ENCODE measurements at regions of chr15 and their contacts with region 1.

Region 1: DNA sequence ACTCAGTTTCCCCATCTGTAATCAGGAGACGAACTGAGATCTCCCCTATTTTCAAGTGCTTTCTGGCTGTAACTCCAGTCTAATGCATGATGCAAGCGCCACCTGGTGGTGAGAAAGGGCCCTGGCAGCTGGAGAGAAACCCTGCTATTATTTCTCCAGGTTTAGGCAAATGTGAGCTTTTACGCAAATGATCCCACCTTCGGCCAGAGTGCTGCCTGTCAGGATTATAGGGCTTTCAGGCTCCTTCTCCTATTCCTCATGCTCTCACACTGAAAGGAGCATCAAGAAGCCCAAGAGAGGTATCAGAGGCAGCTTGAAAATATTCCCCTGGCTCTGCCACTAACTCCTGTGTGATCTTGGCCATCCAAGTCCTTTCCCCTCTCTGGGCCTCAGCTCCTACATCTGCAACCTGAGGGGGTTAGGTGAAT is 93.9 kb upstream of the RASGRF1 start:
- DNase-seq: peak; percentile 8
- H3K4me3 ChIP-seq: no peak overlapping the region
- H3K27ac ChIP-seq: no peak overlapping the region
- H3K27me3 ChIP-seq: peaks cover 10% of the 10 kb centered on the region
- CTCF ChIP-seq: peak; percentile 97

Region 2: GRCh38 chr15:78872972-78873792 is 311.3 kb before region 1 on chr15:
- CTCF ChIA-PET with region 1: interaction called, 10 read pairs
- POLR2A ChIA-PET with region 1: no interaction called
- DNase-seq: peak; percentile 85
- H3K4me3 ChIP-seq: peak overlapping the region; percentile 99
- H3K27ac ChIP-seq: peak overlapping the region; percentile 100
- H3K27me3 ChIP-seq: no peaks in the 10 kb centered on the region
- CTCF ChIP-seq: peak; percentile 59

Region 3: GRCh38 chr15:78915341-78916087 is 269.0 kb before region 1 on chr15:
- CTCF ChIA-PET with region 1: interaction called, 33 read pairs
- POLR2A ChIA-PET with region 1: no interaction called
- DNase-seq: no peak
- H3K4me3 ChIP-seq: no peak overlapping the region
- H3K27ac ChIP-seq: no peak overlapping the region
- H3K27me3 ChIP-seq: no peaks in the 10 kb centered on the region
- CTCF ChIP-seq: no peak

Region 4: GRCh38 chr15:79172801-79173460 is 11.5 kb before region 1 on chr15:
- CTCF ChIA-PET with region 1: interaction called, 25 read pairs
- POLR2A ChIA-PET with region 1: no interaction called
- DNase-seq: no peak
- H3K4me3 ChIP-seq: no peak overlapping the region
- H3K27ac ChIP-seq: no peak overlapping the region
- H3K27me3 ChIP-seq: peaks cover 15% of the 10 kb centered on the region
- CTCF ChIP-seq: no peak